ENCODE measurements at regions of chr17 and their contacts with region 1.

Region 1: DNA sequence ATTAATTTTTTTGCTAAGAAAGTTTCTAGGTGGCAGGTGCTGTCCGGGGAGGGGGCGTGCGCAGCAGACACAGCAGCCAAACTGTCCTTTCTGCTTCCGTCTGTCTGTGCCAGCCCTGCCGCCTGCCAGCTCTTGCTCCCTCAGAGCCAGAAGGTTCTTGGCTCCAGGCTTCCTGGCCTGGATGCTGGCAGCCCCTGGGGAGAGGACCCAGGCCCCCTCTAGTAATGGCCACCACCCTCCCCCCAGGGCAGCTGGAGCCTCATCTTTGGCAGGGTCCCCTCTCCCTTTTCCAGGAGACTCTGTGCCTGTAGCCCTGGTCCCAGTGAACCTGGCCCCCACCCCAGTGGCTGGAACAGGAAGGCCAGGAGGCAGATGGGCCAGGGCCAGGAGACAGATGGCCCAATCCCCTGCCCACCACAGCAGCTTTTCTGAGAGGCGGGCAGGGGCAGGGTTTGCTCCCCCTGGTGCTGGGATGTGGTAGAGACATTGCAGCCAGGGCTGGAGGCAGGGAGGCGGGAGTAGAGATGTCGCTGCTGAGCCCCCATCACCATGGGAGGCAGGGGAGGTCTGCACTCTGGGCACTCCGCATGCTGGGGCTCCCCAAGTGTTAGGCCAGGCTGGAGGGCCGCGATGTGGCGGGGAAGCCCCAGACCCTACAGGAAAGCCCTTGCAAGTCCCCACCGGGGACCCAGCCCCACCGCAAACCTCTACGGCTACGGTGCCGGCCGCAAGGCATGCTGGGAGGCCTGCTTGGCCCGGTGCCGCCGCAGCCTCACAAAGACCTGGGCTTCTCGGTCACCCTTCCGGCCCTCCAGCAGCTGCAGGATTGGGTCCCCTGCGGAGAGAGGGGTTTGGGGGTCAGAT is 16.7 kb downstream of the UNC13D start:
- DNase-seq: peak; percentile 99
- H3K4me3 ChIP-seq: peak overlapping the region; percentile 18 to 37; a peak in 3 of 4 replicates
- H3K27ac ChIP-seq: peak overlapping the region; percentile 10 to 98; a peak in 3 of 4 replicates
- H3K4me1 ChIP-seq: peaks cover 5 to 33% of the 10 kb centered on the region in 2 experiments; a peak in 2 of 4 replicates
- H3K27me3 ChIP-seq: no peaks in the 10 kb centered on the region
- CTCF ChIP-seq: peak; percentile 81
- EP300 ChIP-seq: peak in 1 of 2 experiments; percentile 59; a peak in 3 of 4 replicates
- RAD21 ChIP-seq: peak; percentile 73

Region 2: GRCh38 chr17:75428543-75429469 is 398.7 kb before region 1 on chr17:
- CTCF ChIA-PET with region 1: no interaction called
- POLR2A ChIA-PET with region 1: no interaction called
- DNase-seq: no peak
- H3K4me3 ChIP-seq: no peak overlapping the region
- H3K27ac ChIP-seq: peak overlapping the region in 1 of 2 experiments; percentile 50; a peak in 2 of 4 replicates
- H3K4me1 ChIP-seq: no peaks in the 10 kb centered on the region; a peak in 1 of 4 replicates
- H3K27me3 ChIP-seq: no peaks in the 10 kb centered on the region
- CTCF ChIP-seq: no peak
- EP300 ChIP-seq: no peak
- RAD21 ChIP-seq: no peak

Region 3: DNA sequence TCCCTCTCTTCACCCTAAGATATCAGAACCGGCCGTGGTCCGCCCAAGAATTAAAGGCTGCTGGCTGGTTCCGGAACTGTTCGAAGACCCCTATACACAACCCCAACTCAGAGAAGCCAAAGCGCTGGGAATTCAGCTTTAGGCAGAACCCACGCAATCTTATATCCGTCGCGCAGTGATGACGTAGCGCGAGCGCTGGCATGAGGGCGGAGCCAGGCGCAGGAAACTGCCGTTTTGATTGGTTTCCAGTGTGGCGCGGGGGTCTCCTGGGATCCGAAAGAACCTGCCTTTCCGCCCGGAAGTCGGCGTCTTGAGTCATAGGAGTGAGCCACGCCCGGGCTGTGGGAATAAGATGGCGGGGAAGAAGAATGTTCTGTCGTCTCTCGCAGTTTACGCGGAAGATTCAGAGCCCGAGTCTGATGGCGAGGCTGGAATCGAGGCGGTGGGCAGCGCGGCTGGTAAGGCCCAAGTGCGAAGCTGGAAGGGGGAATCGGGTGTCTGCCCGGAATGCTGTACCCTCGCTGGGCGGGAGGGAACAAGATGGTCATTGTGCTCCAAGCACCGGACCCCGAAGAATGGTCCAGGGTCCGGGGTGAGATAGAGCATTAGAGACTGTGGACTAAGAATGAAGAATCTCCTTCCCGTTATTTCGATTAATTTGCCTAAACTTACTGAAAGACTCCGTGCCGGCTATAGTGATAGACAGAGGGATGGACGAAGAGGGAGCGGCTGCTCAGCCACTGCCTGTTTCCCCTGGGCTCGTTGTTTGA is 160.3 kb before region 1 on chr17 and contains the starts of genes RECQL5 and SAP30BP:
- CTCF ChIA-PET with region 1: no interaction called
- POLR2A ChIA-PET with region 1: no interaction called
- DNase-seq: peak; percentile 96
- H3K4me3 ChIP-seq: peak within 1 kb of the TSS; percentile 94 to 97
- H3K27ac ChIP-seq: peak within 1 kb of the TSS; percentile 79 to 81
- H3K4me1 ChIP-seq: peaks cover 12 to 16% of the 10 kb centered on the region in 2 experiments; a peak in 3 of 4 replicates
- H3K27me3 ChIP-seq: no peaks in the 10 kb centered on the region
- CTCF ChIP-seq: no peak
- EP300 ChIP-seq: no peak
- RAD21 ChIP-seq: no peak
- polyA plus RNA-seq, gene RECQL5: 22.5 and 25.3 TPM in 2 replicates
- polyA plus RNA-seq, gene SAP30BP: 145 and 158 TPM in 2 replicates

Region 4: GRCh38 chr17:75779231-75779986 is 48.1 kb before region 1 on chr17:
- CTCF ChIA-PET with region 1: interaction called, 120 read pairs
- POLR2A ChIA-PET with region 1: interaction called, 39 read pairs
- DNase-seq: peak; percentile 95
- H3K4me3 ChIP-seq: peak overlapping the region; percentile 90 to 94
- H3K27ac ChIP-seq: peak overlapping the region; percentile 97
- H3K4me1 ChIP-seq: peaks cover 18 to 25% of the 10 kb centered on the region in 2 experiments
- H3K27me3 ChIP-seq: no peaks in the 10 kb centered on the region
- CTCF ChIP-seq: 0 out of 2 replicates have a peak, but pooled peaks have one; percentile 7
- EP300 ChIP-seq: 0 out of 4 replicates have a peak, but pooled peaks of 1 of the 2 experiments have one; percentile 23
- RAD21 ChIP-seq: no peak

Region 5: DNA sequence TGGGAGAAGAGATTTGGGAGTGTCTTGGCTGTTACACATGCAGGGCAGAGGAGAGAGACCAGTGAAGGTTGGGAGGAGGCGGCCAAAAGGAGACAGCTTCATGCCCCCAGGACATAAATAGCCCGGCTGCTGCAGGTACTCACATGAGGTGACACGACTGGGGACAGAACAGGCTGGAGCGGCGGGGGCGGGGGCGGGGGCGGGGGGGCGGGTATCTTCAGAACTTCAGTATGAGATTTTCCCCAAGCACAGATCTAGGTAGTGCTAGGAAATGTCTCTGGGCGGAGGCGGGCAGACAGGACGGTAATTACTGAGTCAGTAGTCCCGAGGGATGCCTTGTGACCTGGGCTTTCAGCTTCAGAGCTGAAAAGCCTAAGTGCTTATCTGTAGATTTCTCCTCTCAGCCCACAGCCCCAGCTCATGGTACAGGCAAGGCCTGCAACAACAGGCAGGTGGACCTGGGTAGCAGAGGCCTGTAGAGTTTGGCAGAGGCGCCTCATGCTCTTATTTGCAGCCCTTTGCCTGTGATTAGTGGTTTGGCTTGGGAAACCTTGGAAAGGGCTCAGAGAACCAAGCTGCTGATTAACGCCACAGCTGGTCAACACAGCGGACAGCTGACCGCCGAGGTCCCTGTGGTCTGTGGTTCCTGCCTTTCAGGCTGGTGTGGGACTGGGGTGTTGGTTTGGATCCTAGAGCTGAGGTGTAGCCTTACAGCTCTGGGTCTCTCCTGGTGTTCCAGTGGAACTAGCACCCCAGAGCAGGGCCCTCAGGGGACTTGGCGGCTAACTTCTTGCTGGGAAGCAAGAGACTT is 18.4 kb before region 1 on chr17:
- CTCF ChIA-PET with region 1: interaction called, 90 read pairs
- POLR2A ChIA-PET with region 1: interaction called, 3 read pairs
- DNase-seq: peak; percentile 27
- H3K4me3 ChIP-seq: no peak overlapping the region
- H3K27ac ChIP-seq: peak overlapping the region in 1 of 2 experiments; percentile 30; a peak in 1 of 4 replicates
- H3K4me1 ChIP-seq: peaks cover 0 to 6% of the 10 kb centered on the region in 2 experiments; a peak in 1 of 4 replicates
- H3K27me3 ChIP-seq: no peaks in the 10 kb centered on the region
- CTCF ChIP-seq: no peak
- EP300 ChIP-seq: no peak
- RAD21 ChIP-seq: no peak

Region 6: DNA sequence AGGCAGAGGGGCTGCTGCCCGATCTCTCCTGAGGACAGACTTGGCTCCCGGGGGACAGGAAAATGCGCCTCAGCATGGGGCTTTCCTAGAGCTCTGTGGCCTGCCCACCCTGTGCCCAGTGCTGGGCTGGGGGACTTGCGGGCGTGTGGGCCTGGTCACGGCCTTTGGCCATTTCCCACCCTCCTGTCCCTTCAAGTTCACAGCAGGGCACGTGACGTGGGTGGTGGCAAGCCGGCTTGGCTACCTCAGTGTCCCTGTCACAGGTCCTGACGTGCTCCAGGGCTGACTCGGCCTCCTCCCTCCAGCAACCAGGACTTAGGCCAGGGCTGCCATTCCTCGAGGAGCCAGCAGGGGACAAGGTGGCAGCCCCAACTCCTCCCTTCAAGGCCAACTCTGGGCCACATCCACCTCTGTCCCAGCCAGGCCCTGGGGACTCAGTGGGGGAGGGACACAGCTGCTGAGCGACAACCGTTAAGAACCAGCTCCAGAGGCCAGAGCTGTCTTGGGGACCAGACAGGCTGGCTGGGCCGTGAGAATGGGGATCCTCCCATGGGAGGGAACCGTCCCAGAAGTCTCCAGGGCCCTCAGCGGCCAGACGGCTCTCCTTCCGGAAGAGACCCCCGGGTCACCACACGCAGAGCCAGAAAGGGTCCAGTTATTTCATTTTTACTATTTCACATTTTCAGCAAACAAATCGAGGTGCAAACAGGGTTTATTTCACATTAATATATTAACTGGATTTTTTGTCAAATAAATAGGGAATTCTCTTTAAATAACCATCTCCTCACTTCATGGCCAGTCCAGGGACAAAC is 17.8 kb after region 1 on chr17:
- CTCF ChIA-PET with region 1: interaction called, 326 read pairs
- POLR2A ChIA-PET with region 1: interaction called, 24 read pairs
- DNase-seq: peak; percentile 93
- H3K4me3 ChIP-seq: no peak overlapping the region
- H3K27ac ChIP-seq: peak overlapping the region in 1 of 2 experiments; percentile 93; a peak in 2 of 4 replicates
- H3K4me1 ChIP-seq: peaks cover 4 to 34% of the 10 kb centered on the region in 2 experiments; a peak in 3 of 4 replicates
- H3K27me3 ChIP-seq: no peaks in the 10 kb centered on the region
- CTCF ChIP-seq: peak; percentile 70
- EP300 ChIP-seq: peak in 1 of 2 experiments; percentile 55; a peak in 1 of 4 replicates
- RAD21 ChIP-seq: peak; percentile 44

Region 7: DNA sequence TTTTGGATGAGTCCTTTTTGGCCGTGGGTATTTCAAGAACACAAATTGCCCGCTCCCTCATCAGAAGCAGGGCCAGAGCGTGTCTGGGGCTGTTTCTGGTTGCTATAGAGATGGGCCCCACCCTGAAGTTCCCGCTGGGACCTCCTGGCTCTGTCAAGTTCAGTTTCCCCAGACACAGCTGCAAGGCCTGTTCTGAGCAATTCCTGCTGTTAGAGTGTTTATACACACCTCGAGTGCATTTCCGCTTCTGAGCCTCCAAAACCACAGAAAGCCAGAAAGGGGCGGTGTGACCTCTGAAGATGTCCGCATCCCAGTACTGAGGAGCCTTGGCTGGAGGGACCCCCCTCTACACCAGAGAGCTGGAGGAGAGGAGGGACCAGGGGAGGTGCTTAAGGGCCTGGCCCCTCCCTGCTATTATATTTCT is 37.0 kb after region 1 on chr17:
- CTCF ChIA-PET with region 1: interaction called, 11 read pairs
- POLR2A ChIA-PET with region 1: no interaction called
- DNase-seq: peak; percentile 35
- H3K4me3 ChIP-seq: no peak overlapping the region
- H3K27ac ChIP-seq: no peak overlapping the region
- H3K4me1 ChIP-seq: no peaks in the 10 kb centered on the region; a peak in 1 of 4 replicates
- H3K27me3 ChIP-seq: no peaks in the 10 kb centered on the region
- CTCF ChIP-seq: no peak
- EP300 ChIP-seq: no peak
- RAD21 ChIP-seq: no peak

Region 8: DNA sequence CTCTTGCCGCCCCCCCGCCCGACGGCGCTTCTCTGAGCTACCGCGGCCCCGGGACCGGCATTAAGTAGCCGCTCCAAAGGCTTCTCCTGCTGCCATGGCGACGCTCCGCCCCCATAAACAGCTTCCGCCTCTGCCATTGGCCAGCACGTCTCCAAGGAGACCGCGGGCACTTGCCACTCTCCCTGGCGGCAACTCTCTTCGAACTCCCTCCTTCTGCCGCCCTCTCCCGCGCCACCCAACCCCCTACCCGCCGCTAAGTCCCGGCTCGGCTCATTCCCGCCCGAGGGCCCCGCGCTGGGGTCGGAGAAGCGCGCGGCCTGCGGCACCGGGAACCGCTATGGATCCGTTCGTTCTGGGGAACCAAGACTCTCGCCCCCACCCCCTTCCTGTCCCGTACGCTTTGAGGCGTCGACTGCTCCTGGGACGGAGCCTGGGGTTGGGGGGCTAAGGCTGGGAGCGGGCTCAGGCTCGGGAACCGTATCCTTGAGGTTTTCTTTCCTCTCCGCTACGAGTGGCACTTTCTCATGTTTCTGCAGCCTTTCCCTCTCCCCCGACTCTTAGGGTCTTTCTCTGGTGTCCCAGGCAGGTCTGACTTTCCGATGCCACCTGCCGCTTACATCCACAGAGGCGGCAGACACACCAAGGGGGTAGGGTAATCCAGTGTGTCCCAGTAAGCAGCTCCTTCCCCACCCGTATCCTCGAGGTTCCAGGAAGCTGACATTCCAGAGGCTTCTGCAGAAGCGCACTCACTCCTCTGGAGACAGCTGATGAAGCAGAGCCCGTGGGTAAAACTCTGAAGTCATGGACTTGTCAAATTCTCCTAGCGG is 313.9 kb after region 1 on chr17 and contains the start of gene FOXJ1:
- CTCF ChIA-PET with region 1: no interaction called
- POLR2A ChIA-PET with region 1: no interaction called
- DNase-seq: peak; percentile 100
- H3K4me3 ChIP-seq: peak within 1 kb of the TSS; percentile 55 to 63
- H3K27ac ChIP-seq: no peak within 1 kb of the TSS
- H3K4me1 ChIP-seq: peaks cover 0 to 16% of the 10 kb centered on the region in 2 experiments; a peak in 2 of 4 replicates
- H3K27me3 ChIP-seq: peaks cover 20% of the 10 kb centered on the region; the same call in 1 of the 2 replicates
- CTCF ChIP-seq: no peak
- EP300 ChIP-seq: no peak
- RAD21 ChIP-seq: no peak
- polyA plus RNA-seq, gene FOXJ1: not detected in 2 replicates